MCF 10A (cell line): ENCODE measurements at regions of chr14 and their contacts with region 1.

Region 1: GRCh38 chr14:20682435-20683124 is 1.8 kb upstream of the RNASE4 start:
- DNase-seq: peak; percentile 92
- H3K4me3 Mint-ChIP-seq: no peak overlapping the region
- H3K27ac Mint-ChIP-seq: no peak overlapping the region
- H3K4me1 Mint-ChIP-seq: peaks cover 27% of the 10 kb centered on the region
- H3K27me3 Mint-ChIP-seq: no peaks in the 10 kb centered on the region
- CTCF ChIP-seq: no peak

Region 2: DNA sequence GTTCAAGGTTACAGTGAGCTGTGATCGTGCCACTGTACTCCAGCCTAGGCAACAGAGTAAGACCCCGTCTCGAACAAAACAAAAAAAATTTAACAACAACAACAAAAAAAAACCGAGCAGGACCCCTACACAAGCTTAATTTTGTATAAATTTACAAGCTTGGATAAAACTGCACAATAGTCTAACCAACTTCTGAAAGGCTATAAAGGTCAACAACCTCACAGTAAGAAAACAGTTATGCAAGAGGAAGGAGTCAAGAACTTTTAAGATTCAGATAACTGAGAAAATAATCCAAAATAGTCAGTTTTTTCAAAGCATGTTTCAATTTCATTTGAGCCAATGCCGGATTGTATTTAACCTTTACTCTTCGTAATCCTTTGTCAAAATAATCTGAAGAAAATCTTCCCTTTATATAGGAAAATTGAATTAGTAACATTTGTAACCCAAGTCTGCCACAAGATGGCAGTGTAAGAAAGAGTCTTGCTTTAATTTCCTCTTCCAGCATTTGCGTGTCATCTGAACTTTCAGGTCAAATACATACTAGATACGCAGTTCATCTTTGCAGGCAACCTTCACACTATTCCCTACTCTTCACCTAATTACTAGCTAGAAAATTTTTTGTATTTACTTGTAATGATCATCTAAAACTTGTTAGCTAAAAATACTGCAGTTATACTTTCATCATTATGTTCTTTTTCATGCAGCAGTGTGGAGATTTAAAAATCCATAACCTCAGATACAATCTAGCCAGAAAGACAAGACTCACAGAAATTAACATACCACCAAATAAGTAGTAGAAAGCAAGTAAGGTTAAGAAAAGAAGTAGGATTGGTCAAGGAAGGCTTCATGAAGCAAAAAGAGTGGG is 355.3 kb before region 1 on chr14:
- CTCF ChIA-PET with region 1: interaction called, 22 read pairs
- POLR2A ChIA-PET with region 1: interaction called, 37 read pairs
- intact Hi-C with region 1: loop called (anchors 1 kb)
- DNase-seq: peak; percentile 78
- H3K4me3 Mint-ChIP-seq: no peak overlapping the region
- H3K27ac Mint-ChIP-seq: no peak overlapping the region
- H3K4me1 Mint-ChIP-seq: peaks cover 31% of the 10 kb centered on the region
- H3K27me3 Mint-ChIP-seq: no peaks in the 10 kb centered on the region
- CTCF ChIP-seq: peak; percentile 66

Region 3: DNA sequence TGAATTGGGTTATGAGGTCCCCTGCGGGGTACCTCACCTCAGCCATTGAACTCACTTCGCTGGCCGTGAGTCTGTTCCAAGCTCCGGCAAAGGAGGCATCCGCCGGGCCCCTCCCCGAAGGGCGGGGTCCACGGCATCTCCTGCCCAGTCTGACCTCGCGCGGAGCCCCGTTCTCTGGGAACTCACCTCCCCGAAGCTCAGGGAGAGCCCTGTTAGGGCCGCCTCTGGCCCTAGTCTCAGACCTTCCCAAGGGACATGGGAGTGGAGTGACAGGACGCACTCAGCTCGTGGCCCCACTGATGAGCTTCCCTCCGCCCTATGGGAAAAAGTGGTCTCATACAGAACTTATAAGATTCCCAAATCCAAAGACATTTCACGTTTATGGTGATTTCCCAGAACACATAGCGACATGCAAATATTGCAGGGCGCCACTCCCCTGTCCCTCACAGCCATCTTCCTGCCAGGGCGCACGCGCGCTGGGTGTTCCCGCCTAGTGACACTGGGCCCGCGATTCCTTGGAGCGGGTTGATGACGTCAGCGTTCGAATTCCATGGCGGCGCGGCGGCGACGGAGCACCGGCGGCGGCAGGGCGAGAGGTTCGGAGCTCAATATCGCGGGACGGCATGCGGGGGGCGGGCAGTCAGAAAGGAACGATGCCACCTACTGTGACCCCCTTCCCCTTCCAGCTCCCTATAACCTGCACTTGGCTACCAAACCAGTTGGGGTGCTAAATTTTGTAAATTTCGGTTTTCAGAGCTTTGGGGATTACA is 339.3 kb before region 1 on chr14 and contains the start of gene PARP2:
- CTCF ChIA-PET with region 1: interaction called, 5 read pairs
- POLR2A ChIA-PET with region 1: interaction called, 65 read pairs
- intact Hi-C with region 1: loop called (anchors 2 kb)
- DNase-seq: peak; percentile 100
- H3K4me3 Mint-ChIP-seq: peak within 1 kb of the TSS; percentile 78
- H3K27ac Mint-ChIP-seq: peak within 1 kb of the TSS; percentile 92
- H3K4me1 Mint-ChIP-seq: peaks cover 7% of the 10 kb centered on the region
- H3K27me3 Mint-ChIP-seq: no peaks in the 10 kb centered on the region
- CTCF ChIP-seq: no peak
- total RNA-seq, gene PARP2: 30.4 and 33.4 TPM in 2 replicates

Region 4: DNA sequence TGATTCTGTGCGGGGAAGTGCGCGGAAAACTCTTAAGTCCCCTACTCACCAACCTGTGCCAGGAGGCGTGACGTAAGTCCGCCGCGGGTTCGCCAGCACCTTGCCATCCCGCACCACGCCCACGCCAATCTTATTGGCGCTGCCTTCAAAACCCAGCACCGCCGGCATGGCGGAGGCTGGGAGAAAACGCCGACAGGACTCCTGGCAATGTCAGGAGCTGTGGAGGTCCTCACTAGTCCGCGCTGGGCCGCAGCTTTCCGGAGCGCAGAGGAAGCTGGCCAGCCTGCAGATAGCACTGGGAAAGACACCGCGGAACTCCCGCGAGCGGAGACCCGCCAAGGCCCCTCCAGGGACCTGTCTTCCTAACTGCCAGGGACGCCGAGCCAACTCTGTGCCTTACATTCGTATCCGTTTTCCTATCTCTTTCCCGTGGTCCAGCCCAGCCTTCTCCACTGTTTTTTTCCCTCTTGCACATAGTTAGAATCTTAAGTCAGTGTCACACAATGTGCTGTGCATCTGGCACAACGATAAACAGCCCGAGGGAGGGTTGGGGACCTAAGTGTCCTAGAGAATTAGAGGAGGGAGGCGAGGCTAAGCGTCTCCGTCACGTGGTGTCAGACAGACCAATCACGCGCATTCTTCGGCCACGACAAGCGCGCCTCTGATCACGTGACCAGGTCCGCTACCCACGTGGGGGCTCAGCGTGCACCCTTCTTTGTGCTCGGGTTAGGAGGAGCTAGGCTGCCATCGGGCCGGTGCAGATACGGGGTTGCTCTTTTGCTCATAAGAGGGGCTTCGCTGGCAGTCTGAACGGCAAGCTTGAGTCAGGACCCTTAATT is 227.8 kb before region 1 on chr14 and contains the starts of genes APEX1 and OSGEP:
- CTCF ChIA-PET with region 1: interaction called, 4 read pairs
- POLR2A ChIA-PET with region 1: interaction called, 65 read pairs
- intact Hi-C with region 1: loop called (anchors 2 kb)
- DNase-seq: peak; percentile 99
- H3K4me3 Mint-ChIP-seq: no peak within 1 kb of the TSS
- H3K27ac Mint-ChIP-seq: no peak within 1 kb of the TSS
- H3K4me1 Mint-ChIP-seq: peaks cover 7% of the 10 kb centered on the region
- H3K27me3 Mint-ChIP-seq: no peaks in the 10 kb centered on the region
- CTCF ChIP-seq: no peak
- total RNA-seq, gene APEX1: 140 and 168 TPM in 2 replicates
- total RNA-seq, gene OSGEP: 27.2 and 34.7 TPM in 2 replicates

Region 5: GRCh38 chr14:20469242-20469889 is 213.2 kb before region 1 on chr14 and contains the start of gene PNP:
- CTCF ChIA-PET with region 1: interaction called, 4 read pairs
- POLR2A ChIA-PET with region 1: interaction called, 65 read pairs
- intact Hi-C with region 1: no loop called
- DNase-seq: peak; percentile 91
- H3K4me3 Mint-ChIP-seq: peak within 1 kb of the TSS; percentile 93
- H3K27ac Mint-ChIP-seq: peak within 1 kb of the TSS; percentile 95
- H3K4me1 Mint-ChIP-seq: peaks cover 33% of the 10 kb centered on the region
- H3K27me3 Mint-ChIP-seq: no peaks in the 10 kb centered on the region
- CTCF ChIP-seq: no peak
- total RNA-seq, gene PNP: 56.0 and 63.9 TPM in 2 replicates

Region 6: DNA sequence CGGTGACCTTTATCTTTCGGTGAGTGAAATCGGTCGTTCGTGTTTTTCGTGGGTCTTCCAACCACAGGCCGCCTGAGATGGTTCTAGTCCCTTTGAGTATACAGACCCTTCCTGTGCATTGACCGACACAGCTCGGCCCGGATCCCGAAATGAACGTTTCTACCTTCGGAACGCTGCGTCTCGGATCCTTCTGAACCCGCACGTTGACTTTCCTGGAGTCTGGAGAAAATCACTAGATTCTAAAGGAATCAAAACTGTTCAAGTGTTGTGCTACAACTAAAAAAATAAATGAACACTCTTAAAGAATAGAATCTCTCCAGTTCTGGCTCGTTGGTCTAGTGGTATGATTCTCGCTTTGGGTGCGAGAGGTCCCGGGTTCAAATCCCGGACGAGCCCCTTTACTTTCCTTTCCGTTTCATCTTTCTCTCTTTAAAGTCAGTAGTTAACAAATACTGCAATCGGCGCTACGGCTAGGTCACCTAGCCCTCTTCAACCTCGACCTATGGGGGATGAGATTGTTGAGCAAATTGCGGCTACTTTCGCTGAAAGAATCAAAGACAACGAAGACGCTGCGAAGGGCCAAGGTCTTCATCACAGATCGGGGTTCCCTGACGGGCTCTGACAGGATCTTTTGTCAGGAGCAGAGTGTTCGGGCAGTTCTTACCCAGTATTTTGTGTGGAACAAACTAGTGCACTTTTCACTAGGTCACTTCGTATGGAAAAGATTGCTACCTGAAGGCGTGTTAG is 49.7 kb before region 1 on chr14:
- CTCF ChIA-PET with region 1: interaction called, 13 read pairs
- POLR2A ChIA-PET with region 1: interaction called, 123 read pairs
- intact Hi-C with region 1: loop called (anchors 1 kb)
- DNase-seq: peak; percentile 82
- H3K4me3 Mint-ChIP-seq: peak overlapping the region; percentile 74
- H3K27ac Mint-ChIP-seq: peak overlapping the region; percentile 48
- H3K4me1 Mint-ChIP-seq: peaks cover 23% of the 10 kb centered on the region
- H3K27me3 Mint-ChIP-seq: no peaks in the 10 kb centered on the region
- CTCF ChIP-seq: no peak

Region 7: DNA sequence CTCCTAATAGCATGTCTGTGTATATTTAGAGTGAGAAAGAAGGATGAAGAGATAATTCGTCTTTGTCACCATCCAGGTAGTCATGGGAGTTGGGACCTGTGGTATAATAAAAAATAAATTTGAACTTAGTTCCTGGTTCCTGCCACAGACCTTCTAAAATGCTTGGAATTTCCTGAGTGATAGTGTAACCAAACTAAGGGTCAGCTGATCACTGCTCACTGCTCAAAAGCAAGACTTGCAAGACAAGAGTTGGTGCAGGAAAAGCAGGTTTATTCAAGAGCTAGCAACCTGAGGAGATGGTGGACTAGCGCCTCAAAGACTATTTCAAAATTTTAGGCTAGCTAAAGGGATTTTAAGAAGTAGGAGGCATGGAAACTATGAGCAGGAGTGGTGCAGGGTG is 25.0 kb after region 1 on chr14:
- CTCF ChIA-PET with region 1: no interaction called
- POLR2A ChIA-PET with region 1: no interaction called
- intact Hi-C with region 1: no loop called
- DNase-seq: no peak
- H3K4me3 Mint-ChIP-seq: no peak overlapping the region
- H3K27ac Mint-ChIP-seq: no peak overlapping the region
- H3K4me1 Mint-ChIP-seq: no peaks in the 10 kb centered on the region
- H3K27me3 Mint-ChIP-seq: no peaks in the 10 kb centered on the region
- CTCF ChIP-seq: no peak

Region 8: DNA sequence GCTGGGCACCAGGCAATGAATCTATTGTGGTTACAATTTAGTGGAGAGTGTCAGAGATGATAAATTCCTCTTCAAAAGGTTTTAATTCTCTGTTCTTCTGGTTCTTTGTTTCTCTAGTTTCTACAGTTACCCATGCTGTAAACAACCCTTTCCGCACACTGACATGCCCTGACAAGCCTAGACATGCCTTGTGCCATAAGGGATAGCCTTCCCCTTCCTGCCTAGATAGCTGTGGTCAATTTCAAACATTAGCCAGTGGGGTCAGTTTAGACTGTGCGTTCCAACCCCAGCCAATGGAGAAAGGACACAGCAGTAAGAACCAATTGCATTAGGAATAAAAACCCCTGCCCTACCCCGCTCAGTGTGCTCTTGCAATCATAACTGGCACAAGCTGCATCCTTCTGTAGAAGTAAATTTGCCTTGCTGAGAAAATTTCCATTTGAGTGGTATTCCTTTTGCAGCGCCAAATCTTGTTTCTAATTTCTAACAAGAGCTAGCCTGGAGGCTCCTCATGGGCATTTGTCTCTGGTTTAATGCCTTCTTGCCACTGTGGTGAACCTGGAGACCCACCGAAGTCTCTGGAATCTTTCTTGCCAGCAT is 69.5 kb after region 1 on chr14:
- CTCF ChIA-PET with region 1: no interaction called
- POLR2A ChIA-PET with region 1: no interaction called
- intact Hi-C with region 1: no loop called
- DNase-seq: peak; percentile 17
- H3K4me3 Mint-ChIP-seq: no peak overlapping the region
- H3K27ac Mint-ChIP-seq: no peak overlapping the region
- H3K4me1 Mint-ChIP-seq: no peaks in the 10 kb centered on the region
- H3K27me3 Mint-ChIP-seq: no peaks in the 10 kb centered on the region
- CTCF ChIP-seq: no peak